BJ (cell line): ENCODE measurements at regions of chr3 and their contacts with region 1.

Region 1: DNA sequence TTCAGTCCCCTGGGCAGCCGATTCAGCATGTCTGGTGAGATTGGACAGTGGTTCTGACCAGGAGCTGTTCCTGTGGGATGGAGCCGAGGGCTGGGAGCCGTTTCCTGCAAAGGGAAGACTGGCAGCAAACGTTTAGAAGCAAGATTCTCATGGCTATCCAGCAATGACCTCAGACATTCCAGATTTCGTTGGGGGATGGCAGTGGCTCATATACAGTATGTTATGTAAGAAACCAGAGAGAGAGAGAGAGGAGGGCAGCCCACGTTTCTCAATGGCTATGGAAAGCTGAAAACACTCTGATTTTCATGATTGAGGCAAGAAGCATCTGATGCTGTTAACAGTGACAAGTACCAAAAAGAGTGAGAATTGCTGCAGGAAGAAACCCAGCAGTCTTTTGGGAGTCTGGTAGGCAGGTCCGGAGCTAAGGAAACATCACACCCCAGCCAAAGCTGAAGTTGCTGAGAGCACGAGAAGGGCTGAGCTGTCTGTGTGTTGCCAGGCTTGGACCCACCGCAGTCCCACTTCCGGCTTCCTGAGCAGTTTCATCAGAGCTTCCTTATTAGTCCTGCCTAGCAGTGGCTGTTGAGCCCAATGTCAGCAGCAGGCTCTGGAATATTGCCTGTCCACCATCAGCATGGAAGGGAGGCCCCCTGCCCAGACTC is 25.6 kb upstream of the VPS8 start:
- DNase-seq: peak; percentile 83
- H3K4me3 ChIP-seq: 0 out of 2 replicates have a peak overlapping the region, but pooled peaks have one; percentile 1
- H3K27me3 ChIP-seq: no peaks in the 10 kb centered on the region
- CTCF ChIP-seq: no peak

Region 2: GRCh38 chr3:184800349-184800930 is 14.0 kb after region 1 on chr3:
- CTCF ChIA-PET with region 1: interaction called, 39 read pairs
- POLR2A ChIA-PET with region 1: no interaction called
- DNase-seq: no peak
- H3K4me3 ChIP-seq: no peak overlapping the region
- H3K27me3 ChIP-seq: peaks cover 2% of the 10 kb centered on the region
- CTCF ChIP-seq: no peak